HepG2 (cell line): ENCODE measurements at regions of chr4 and their contacts with region 1.

Region 1: GRCh38 chr4:53196882-53197771 is 168.7 kb downstream of the SCFD2 start:
- DNase-seq: peak; percentile 65
- ATAC-seq: peak; percentile 59; the same call in 2 of the 3 replicates
- H3K4me3 ChIP-seq: no peak overlapping the region
- H3K27ac ChIP-seq: no peak overlapping the region
- H3K4me1 ChIP-seq: 0 out of 2 replicates have a peak, but pooled peaks cover 2% of the 10 kb centered on the region
- H3K27me3 ChIP-seq: no peaks in the 10 kb centered on the region; a peak in 1 of 5 replicates
- CTCF ChIP-seq: peak; percentile 74
- EP300 ChIP-seq: no peak
- POLR2A ChIP-seq: no peak
- RAD21 ChIP-seq: peak; percentile 64

Region 2: DNA sequence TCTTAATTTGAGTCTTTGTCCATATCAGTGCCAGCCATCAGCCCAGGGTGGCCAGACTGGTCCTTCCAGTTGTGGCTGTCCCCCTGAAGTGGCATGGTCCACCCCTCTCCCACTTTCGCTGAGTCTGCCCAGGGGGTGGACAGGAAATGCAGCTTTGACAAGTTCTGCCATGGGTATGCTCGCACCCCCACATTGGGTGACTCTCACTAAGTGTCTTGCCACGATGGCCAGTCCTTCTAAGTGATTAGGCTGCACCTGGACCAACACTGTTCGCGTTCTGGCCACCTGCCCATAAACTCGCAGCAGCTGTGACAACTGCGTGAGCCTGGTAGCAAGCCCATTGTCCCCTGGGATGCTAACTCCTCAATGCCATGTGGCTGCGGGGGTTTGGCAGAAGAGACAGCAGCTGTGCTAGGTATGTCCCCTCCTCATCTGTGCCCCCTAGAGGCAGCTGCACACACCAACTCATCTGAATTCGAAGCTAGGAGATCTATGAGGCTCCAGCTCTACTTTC is 404.2 kb after region 1 on chr4:
- CTCF ChIA-PET with region 1: interaction called, 3 read pairs
- POLR2A ChIA-PET with region 1: no interaction called
- in situ Hi-C with region 1: loop called (anchors 25 kb)
- intact Hi-C with region 1: no loop called
- DNase-seq: peak; percentile 27
- ATAC-seq: peak; percentile 94
- H3K4me3 ChIP-seq: no peak overlapping the region
- H3K27ac ChIP-seq: no peak overlapping the region
- H3K4me1 ChIP-seq: no peaks in the 10 kb centered on the region
- H3K27me3 ChIP-seq: no peaks in the 10 kb centered on the region; a peak in 1 of 5 replicates
- CTCF ChIP-seq: peak; percentile 68
- EP300 ChIP-seq: no peak
- POLR2A ChIP-seq: no peak
- RAD21 ChIP-seq: no peak

Region 3: DNA sequence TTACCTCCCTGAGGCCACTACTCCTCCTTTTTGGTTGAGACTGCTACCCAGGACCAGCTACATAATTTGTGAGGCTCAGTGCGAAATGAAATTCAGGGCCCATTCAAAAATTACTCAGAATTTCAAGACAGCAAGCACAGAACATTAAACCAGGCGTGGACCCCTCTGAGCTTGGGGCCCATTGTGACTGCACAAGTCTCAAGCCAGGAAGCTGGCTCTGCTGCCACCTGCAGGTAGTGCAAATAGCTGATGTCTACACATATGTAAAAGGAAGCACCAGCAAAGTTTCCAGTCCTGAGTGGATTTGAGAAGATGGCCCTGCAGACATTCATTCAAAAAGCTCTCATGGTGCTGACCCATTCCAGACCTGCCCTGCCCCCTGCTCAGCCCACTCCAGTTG is 607.6 kb after region 1 on chr4:
- CTCF ChIA-PET with region 1: no interaction called
- POLR2A ChIA-PET with region 1: no interaction called
- in situ Hi-C with region 1: no loop called
- intact Hi-C with region 1: loop called (anchors 10 kb)
- DNase-seq: peak; percentile 27
- ATAC-seq: peak; percentile 71; the same call in 2 of the 3 replicates
- H3K4me3 ChIP-seq: no peak overlapping the region
- H3K27ac ChIP-seq: no peak overlapping the region
- H3K4me1 ChIP-seq: no peaks in the 10 kb centered on the region
- H3K27me3 ChIP-seq: no peaks in the 10 kb centered on the region
- CTCF ChIP-seq: peak; percentile 62
- EP300 ChIP-seq: no peak
- POLR2A ChIP-seq: no peak
- RAD21 ChIP-seq: no peak

Region 4: DNA sequence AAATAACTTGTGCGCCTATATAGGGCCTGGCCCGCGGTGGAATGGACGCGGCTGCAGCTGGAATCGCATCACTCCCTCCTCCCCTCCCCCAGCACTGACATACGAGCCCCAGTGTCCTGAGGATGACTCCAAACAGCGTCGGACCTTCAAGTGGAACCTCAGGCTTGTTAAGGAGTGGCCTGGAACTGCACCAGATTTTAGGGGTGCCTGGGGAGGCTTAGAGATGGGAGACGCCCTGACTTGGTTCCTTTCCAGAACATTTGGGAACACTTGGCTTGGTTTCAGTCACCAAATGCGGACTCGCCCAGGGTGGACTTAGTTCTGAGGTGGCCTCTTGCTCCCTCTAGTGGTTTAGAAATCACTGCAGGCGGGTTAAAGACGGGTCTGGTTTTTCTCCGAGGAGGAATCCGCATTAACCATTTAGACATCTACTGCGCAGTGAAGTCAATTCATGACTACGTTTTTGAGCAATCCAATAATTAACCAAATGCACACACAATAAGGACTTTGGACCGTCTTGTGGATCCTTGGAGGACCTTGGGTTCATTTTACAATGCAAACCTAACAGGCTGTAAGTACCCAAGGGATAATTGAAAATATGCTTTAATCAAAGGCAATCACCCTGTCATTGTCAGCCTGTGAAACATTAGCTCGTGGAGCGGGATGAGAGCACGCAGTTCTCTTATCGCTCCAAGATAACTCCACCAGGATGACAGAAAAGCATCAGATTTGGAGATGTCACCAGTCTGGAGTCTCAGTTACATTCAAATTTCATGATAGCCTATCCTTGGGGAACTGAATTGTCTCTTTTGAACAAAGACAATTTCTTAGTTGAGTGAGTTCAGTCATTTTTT is 1020.7 kb after region 1 on chr4:
- CTCF ChIA-PET with region 1: no interaction called
- POLR2A ChIA-PET with region 1: no interaction called
- in situ Hi-C with region 1: no loop called
- intact Hi-C with region 1: loop called (anchors 5 kb)
- DNase-seq: peak; percentile 52
- ATAC-seq: peak; percentile 97
- H3K4me3 ChIP-seq: peak overlapping the region in 1 of 3 experiments; percentile 59; a peak in 2 of 6 replicates
- H3K27ac ChIP-seq: no peak overlapping the region
- H3K4me1 ChIP-seq: no peaks in the 10 kb centered on the region
- H3K27me3 ChIP-seq: peaks cover 0 to 5% of the 10 kb centered on the region in 2 experiments; a peak in 3 of 5 replicates
- CTCF ChIP-seq: peak; percentile 92
- EP300 ChIP-seq: no peak
- POLR2A ChIP-seq: no peak
- RAD21 ChIP-seq: peak; percentile 83

Region 5: GRCh38 chr4:54898656-54899340 is 1701.7 kb after region 1 on chr4:
- CTCF ChIA-PET with region 1: no interaction called
- POLR2A ChIA-PET with region 1: no interaction called
- in situ Hi-C with region 1: no loop called
- intact Hi-C with region 1: loop called (anchors 10 kb)
- DNase-seq: no peak
- ATAC-seq: no peak
- H3K4me3 ChIP-seq: no peak overlapping the region
- H3K27ac ChIP-seq: no peak overlapping the region
- H3K4me1 ChIP-seq: no peaks in the 10 kb centered on the region
- H3K27me3 ChIP-seq: no peaks in the 10 kb centered on the region
- CTCF ChIP-seq: no peak
- EP300 ChIP-seq: no peak
- POLR2A ChIP-seq: no peak
- RAD21 ChIP-seq: no peak